Dorsolateral prefrontal cortex (tissue), 120 donors: ENCODE measurements at regions of chr7 and their contacts with region 1.

Region 1: GRCh38 chr7:55279080-55279845 is 85.9 kb upstream of the LANCL2 start:
- DNase-seq: no peak
- H3K4me3 ChIP-seq: no peak overlapping the region
- H3K27ac ChIP-seq: no peak overlapping the region
- H3K27me3 ChIP-seq: no peaks in the 10 kb centered on the region
- CTCF ChIP-seq: no peak

Region 2: DNA sequence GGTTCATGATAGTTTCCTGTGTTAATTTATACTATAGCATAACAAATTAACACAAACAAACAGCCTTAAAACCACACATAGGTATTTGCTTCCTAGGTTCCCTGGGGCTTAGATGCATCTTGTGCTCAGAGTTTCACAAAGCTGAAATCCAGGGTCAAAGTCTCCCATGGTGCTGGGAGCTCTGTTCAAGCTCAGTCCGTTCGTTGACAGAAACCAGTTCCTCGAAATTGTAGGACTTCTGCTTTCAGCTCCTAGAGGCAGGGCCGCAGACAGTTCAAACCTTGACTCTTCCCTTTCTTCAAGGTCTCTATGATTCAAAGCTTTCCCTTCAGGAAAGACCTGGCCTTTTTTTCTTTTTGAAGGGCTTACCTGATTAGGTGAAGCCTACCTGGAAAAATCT is 646.6 kb before region 1 on chr7:
- intact Hi-C with region 1: no loop called
- DNase-seq: no peak
- H3K4me3 ChIP-seq: no peak overlapping the region
- H3K27ac ChIP-seq: no peak overlapping the region
- H3K27me3 ChIP-seq: no peaks in the 10 kb centered on the region
- CTCF ChIP-seq: no peak

Region 3: GRCh38 chr7:55048221-55048859 is 230.9 kb before region 1 on chr7:
- intact Hi-C with region 1: no loop called
- DNase-seq: no peak
- H3K4me3 ChIP-seq: no peak overlapping the region
- H3K27ac ChIP-seq: peak overlapping the region in 1 of 59 donors; percentile 23
- H3K27me3 ChIP-seq: peaks cover 0 to 4% (median 0%) of the 10 kb centered on the region in 45 donors
- CTCF ChIP-seq: no peak

Region 4: GRCh38 chr7:55314962-55315685 is 35.9 kb after region 1 on chr7:
- intact Hi-C with region 1: no loop called
- DNase-seq: no peak
- H3K4me3 ChIP-seq: no peak overlapping the region
- H3K27ac ChIP-seq: no peak overlapping the region
- H3K27me3 ChIP-seq: peaks cover 0 to 5% (median 0%) of the 10 kb centered on the region in 45 donors
- CTCF ChIP-seq: no peak

Region 5: DNA sequence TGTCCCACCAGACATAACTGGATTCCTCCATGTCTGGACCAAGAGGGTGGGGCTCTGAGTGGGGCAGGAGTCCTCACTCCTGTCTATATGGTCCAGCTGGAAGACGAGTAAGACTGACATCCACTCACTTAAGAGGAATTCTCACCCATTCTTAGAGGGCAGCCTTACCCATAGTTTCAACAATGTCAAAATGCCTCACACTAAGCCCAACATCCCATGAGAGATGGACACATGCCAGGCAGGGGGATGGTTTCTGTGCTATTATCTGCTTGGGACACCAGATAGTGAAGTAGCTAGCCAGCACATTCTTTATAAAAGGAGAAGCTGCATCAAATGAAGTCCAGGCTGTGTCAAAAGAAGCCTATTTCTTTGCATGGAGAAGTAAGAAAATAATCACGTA is 81.2 kb after region 1 on chr7:
- intact Hi-C with region 1: loop called in 1 of 2 experiments (anchors 5 kb)
- DNase-seq: no peak
- H3K4me3 ChIP-seq: no peak overlapping the region
- H3K27ac ChIP-seq: no peak overlapping the region
- H3K27me3 ChIP-seq: no peaks in the 10 kb centered on the region
- CTCF ChIP-seq: no peak

Region 6: DNA sequence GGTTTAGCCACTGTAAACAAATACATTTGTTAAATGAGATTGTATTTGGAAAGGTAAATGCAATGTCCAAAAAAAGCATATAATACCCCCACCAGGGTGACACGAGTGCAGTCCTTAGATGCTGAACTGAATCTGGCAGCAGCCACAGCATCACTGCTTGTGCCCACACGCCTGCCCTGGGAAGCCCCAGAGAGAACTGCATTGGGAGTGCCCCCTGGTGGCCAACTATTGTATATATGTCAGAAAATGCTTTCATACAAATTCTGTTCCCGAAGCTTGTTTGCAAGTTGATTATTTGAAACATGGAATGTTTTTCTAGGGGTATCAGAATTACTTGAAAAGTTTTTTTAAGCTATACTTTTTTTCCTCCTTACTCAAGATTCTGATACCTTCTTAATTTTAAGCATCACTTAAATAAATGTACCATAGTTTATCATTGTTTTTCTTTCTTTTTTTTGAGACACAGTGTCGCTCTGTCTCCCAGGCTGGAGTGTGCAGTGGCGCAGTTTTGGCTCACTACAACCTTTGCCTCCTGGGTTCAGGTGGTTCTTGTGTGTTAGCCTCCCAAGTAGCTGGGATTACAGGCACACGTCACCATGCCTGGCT is 136.0 kb after region 1 on chr7:
- intact Hi-C with region 1: loop called (anchors 2 to 5 kb)
- DNase-seq: peak; percentile 64 to 88 (median 80)
- H3K4me3 ChIP-seq: no peak overlapping the region
- H3K27ac ChIP-seq: peak overlapping the region in 2 of 59 donors; percentile 12 to 23
- H3K27me3 ChIP-seq: no peaks in the 10 kb centered on the region
- CTCF ChIP-seq: peak; percentile 77 to 99 (median 91)

Region 7: DNA sequence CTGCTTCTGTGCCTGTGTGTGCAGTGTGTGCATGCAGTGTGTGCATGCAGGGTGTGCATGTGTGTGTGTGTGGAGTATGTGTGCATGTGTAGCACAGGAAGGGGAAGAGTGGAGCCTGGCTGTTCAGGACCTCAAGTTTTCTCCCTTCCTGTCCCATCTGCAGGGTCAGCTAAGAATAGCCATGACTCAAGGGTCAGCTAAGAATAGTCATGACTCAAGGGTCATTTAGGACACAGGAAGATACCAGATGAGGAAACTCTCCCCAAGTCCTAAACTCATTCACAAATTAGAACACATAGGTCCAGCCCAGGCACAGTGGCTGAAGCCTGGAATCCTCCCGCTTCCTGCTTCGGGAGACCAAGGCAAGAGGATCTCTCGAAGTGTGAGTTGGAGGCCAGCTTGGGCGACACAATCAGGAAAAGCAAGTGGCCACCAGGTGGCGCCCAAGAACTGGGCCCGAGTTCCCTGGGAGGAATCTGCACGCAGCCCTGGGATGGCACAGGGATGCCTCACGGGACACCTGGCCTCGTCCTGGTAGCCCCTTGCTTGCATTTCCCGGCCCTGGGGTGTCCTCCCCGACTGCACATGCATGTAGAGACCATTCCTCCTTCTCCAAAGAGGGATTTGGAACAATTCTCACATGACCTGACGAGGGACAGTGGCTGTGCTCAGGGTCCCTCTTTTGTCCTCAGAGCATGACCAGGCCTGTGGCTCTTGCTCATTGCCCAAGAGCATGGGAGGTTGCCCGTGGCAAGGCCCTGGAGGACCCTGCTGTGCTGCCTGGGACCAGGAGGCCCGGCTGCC is 314.5 kb after region 1 on chr7:
- intact Hi-C with region 1: loop called in 1 of 2 experiments (anchors 5 kb)
- DNase-seq: peak in 7 of 10 donors; percentile 22 to 74 (median 52)
- H3K4me3 ChIP-seq: no peak overlapping the region
- H3K27ac ChIP-seq: no peak overlapping the region
- H3K27me3 ChIP-seq: peaks cover 0 to 4% (median 0%) of the 10 kb centered on the region in 45 donors
- CTCF ChIP-seq: peak; percentile 53 to 88 (median 72)